Activated T-helper 2 cell treated with anti-CD3 and anti-CD28 coated beads, Interferon-gamma antibody, Interleukin-2, Interleukin-4, amounts not matched to agents 10 μg/mL and 5 μg/mL and 100 μg/mL, durations not matched to agents 14 hours and 24 hours and 36 hours (primary cell): ENCODE measurements at regions of chr10 and their contacts with region 1.

Region 1: GRCh38 chr10:78029269-78030226 is at the start of gene POLR3A:
- DNase-seq: peak; percentile 90
- H3K4me3 Mint-ChIP-seq: peak within 1 kb of the TSS; percentile 99
- H3K27ac Mint-ChIP-seq: peak within 1 kb of the TSS; percentile 94
- H3K4me1 Mint-ChIP-seq: peaks cover 22% of the 10 kb centered on the region
- H3K27me3 Mint-ChIP-seq: no peaks in the 10 kb centered on the region
- total RNA-seq, gene POLR3A: 23.5 and 24.2 TPM in 2 replicates

Region 2: GRCh38 chr10:77837240-77837924 is 192.2 kb before region 1 on chr10:
- intact Hi-C with region 1: loop called (anchors 5 kb)
- DNase-seq: peak; percentile 66
- H3K4me3 Mint-ChIP-seq: no peak overlapping the region
- H3K27ac Mint-ChIP-seq: peak overlapping the region; percentile 53
- H3K4me1 Mint-ChIP-seq: peaks cover 8% of the 10 kb centered on the region
- H3K27me3 Mint-ChIP-seq: no peaks in the 10 kb centered on the region

Region 3: GRCh38 chr10:77926566-77927401 is 102.8 kb before region 1 on chr10 and contains the start of gene DLG5:
- intact Hi-C with region 1: loop called (anchors 10 kb)
- DNase-seq: peak; percentile 25
- H3K4me3 Mint-ChIP-seq: peak within 1 kb of the TSS; percentile 73
- H3K27ac Mint-ChIP-seq: no peak within 1 kb of the TSS
- H3K4me1 Mint-ChIP-seq: peaks cover 10% of the 10 kb centered on the region
- H3K27me3 Mint-ChIP-seq: peaks cover 39% of the 10 kb centered on the region
- total RNA-seq, gene DLG5: 6.7 and 7.8 TPM in 2 replicates

Region 4: DNA sequence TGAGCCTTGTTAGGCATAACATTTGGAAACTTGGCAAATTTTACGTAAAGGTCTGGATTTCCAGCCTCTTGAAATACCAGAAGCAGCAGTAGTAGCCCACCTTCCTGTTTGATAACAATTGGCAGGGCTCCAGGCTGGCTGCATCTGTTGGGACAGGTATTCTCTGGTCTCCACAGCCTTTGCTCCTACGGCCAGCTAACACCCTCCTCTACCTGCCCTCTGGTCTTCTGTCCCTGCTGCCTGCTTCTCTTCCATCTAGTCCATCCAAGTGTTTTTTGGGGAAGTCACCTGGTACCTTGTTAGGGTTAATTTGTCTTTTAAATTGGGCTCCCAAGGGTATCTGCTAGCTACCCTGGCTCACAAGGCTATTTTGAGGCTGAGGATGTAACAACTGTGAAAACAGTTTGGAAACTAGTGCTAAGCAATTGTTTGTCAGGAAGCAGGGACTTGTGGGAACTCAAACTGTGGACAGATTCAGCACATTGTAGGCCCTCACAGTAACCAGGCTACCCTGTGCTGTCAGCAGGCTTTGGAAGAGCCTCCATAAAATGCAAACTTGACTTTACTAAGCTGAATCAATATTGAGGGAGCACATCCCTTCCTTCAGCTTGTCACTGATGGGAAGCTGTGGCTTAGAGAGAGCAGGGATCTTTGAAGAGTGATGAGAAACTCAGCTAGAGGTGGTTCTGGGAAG is 12.7 kb after region 1 on chr10:
- intact Hi-C with region 1: loop called (anchors 1 kb)
- DNase-seq: no peak
- H3K4me3 Mint-ChIP-seq: no peak overlapping the region
- H3K27ac Mint-ChIP-seq: peak overlapping the region; percentile 8
- H3K4me1 Mint-ChIP-seq: peaks cover 35% of the 10 kb centered on the region
- H3K27me3 Mint-ChIP-seq: no peaks in the 10 kb centered on the region

Region 5: DNA sequence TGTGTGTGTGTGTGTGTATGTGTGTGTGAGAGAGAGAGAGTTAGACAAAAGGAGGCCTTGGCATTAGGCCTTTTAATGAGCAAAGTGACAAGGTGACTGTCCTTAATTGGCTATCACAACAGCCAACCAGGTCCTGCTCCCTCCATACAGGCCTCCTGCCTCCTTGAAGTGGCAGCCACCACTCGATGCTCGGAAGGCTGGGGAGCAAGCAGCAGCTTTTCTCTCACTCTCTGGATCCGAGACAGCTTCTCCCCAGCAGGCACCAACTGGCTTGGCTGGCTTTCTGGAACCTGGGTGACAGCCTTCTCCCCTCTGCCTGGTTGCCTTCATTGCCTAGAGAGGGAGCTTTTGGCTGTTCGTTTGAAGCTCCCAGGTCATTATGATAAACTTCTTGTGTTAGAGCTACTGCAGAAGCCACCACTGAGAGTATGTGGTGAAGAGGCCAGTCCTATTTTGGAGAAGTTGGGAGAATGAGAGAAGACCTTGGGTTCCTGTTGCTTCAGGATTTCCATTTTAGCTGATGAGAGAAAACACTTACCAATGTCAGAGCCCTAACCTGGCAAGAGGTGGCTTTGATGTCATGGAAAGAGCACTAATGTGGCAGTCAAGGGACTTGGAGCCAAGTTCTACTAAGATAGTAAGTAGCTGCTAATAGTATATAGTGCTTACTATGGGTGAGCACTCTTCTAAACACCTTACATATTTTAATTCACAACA is 41.8 kb after region 1 on chr10:
- intact Hi-C with region 1: no loop called
- DNase-seq: no peak
- H3K4me3 Mint-ChIP-seq: no peak overlapping the region
- H3K27ac Mint-ChIP-seq: no peak overlapping the region
- H3K4me1 Mint-ChIP-seq: peaks cover 2% of the 10 kb centered on the region
- H3K27me3 Mint-ChIP-seq: no peaks in the 10 kb centered on the region

Region 6: DNA sequence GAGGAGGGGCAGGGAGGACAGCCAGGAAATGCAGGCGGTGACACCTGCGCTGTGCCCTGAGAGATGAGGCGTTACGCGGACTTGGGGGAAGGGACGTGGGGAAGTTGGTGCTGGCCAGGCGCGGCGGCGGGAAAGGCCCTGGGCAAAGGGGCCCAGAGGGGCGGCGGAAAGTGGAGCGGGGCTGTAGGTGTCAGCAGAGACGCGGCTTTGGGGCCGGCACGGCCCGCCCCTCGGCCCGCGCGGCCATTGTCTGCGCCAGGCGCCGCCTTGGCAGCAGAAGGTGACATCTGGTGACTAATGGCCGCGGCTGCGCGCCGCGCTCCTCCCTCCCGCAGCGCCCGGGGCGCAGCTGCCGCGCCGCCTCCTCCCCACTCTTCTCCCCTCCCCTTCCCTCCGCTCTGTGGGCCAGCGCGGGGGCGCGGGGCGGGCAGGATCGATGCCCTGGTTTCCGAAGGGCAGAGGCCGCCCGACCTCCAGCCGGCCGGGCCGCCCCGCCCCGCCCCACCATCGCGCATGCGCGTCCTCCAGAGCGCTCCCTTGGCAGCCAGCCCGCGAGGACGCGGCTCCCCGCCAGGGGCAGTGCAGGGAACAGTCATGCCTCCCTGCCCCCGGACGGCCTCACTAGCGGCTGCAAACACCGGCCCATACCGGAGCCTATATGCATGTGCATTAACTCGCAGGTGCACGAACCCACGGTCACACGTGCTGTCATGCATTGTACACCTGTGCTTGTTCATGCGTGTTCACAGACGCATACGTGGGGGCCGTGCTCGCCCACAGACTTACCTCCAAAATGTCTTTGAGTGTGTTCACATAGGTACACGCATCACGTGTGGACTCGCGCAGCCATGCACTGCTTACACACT is 273.7 kb after region 1 on chr10:
- intact Hi-C with region 1: loop called (anchors 1 kb)
- DNase-seq: peak; percentile 91
- H3K4me3 Mint-ChIP-seq: peak overlapping the region; percentile 87
- H3K27ac Mint-ChIP-seq: peak overlapping the region; percentile 94
- H3K4me1 Mint-ChIP-seq: peaks cover 16% of the 10 kb centered on the region
- H3K27me3 Mint-ChIP-seq: peaks cover 20% of the 10 kb centered on the region

Region 7: DNA sequence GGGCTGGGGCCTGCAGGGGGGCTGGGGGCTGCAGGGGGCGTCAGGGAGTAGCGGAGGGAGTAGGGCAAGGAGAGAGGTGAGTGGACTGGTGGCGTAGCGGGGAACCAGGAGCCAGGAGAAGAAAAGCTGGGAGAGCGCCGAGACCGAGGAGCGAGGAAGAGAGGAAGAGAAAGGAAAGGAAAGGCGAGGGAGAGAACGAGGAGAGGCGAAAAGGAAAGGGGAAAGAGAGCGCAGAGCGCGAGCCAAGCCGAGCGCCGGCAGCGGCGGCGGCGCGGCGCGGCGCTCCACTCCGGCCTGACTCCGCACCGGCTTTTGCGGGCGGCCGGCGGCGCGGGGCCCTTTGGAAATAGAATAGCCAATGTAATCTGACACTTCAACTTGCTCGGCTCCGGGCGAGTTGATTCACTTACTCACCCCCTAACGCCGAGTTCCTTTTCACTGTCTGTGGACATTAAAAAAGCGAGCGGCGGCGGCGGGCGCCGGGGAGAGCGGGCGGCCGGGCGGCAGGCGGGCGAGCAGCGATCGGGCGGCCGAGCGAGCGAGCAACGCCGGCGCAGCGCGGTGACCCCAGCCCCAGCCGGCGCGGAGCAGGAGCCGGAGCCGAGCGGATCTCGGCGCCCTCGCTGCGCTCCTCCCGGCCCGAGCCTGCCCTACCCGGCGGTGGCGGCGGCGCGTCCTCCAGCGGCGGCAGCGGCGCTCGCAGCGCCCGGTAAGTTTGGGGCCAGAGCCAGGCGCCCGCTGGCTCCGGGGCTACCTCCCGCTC is 1039.2 kb after region 1 on chr10 and contains the start of gene ZMIZ1:
- intact Hi-C with region 1: loop called (anchors 2 kb)
- DNase-seq: peak; percentile 81
- H3K4me3 Mint-ChIP-seq: peak within 1 kb of the TSS; percentile 86
- H3K27ac Mint-ChIP-seq: peak within 1 kb of the TSS; percentile 80
- H3K4me1 Mint-ChIP-seq: peaks cover 29% of the 10 kb centered on the region
- H3K27me3 Mint-ChIP-seq: peaks cover 13% of the 10 kb centered on the region
- total RNA-seq, gene ZMIZ1: 79.2 and 80.4 TPM in 2 replicates